ENCODE measurements at regions of chr17 and their contacts with region 1.

Region 1: GRCh38 chr17:17496189-17497064 is at the start of gene RASD1:
- DNase-seq: peak; percentile 93 to 95
- H3K4me3 ChIP-seq: peak within 1 kb of the TSS; percentile 58 to 64 (median 62)
- H3K27ac ChIP-seq: peak within 1 kb of the TSS; percentile 85 to 96 (median 92)
- H3K4me1 ChIP-seq: peaks cover 20 to 51% (median 49%) of the 10 kb centered on the region in 4 donors
- H3K27me3 ChIP-seq: peaks cover 0 to 17% (median 12%) of the 10 kb centered on the region in 3 donors
- CTCF ChIP-seq: peak in 5 of 7 experiments; percentile 30 to 98 (median 96)
- EP300 ChIP-seq: no peak
- POLR2A ChIP-seq: peak in 2 of 4 donors; percentile 61 to 97
- total RNA-seq, gene RASD1: 3.7 to 72.9 (median 25.0) TPM

Region 2: GRCh38 chr17:17356149-17356930 is 140.1 kb before region 1 on chr17:
- intact Hi-C with region 1: loop called (anchors 10 kb)
- DNase-seq: peak; percentile 83 to 94
- H3K4me3 ChIP-seq: no peak overlapping the region
- H3K27ac ChIP-seq: no peak overlapping the region
- H3K4me1 ChIP-seq: peaks cover 0 to 13% (median 6%) of the 10 kb centered on the region in 4 donors
- H3K27me3 ChIP-seq: peaks cover 0 to 21% (median 0%) of the 10 kb centered on the region in 3 donors
- CTCF ChIP-seq: peak in 6 of 7 experiments; percentile 90 to 100 (median 100)
- EP300 ChIP-seq: no peak
- POLR2A ChIP-seq: no peak

Region 3: DNA sequence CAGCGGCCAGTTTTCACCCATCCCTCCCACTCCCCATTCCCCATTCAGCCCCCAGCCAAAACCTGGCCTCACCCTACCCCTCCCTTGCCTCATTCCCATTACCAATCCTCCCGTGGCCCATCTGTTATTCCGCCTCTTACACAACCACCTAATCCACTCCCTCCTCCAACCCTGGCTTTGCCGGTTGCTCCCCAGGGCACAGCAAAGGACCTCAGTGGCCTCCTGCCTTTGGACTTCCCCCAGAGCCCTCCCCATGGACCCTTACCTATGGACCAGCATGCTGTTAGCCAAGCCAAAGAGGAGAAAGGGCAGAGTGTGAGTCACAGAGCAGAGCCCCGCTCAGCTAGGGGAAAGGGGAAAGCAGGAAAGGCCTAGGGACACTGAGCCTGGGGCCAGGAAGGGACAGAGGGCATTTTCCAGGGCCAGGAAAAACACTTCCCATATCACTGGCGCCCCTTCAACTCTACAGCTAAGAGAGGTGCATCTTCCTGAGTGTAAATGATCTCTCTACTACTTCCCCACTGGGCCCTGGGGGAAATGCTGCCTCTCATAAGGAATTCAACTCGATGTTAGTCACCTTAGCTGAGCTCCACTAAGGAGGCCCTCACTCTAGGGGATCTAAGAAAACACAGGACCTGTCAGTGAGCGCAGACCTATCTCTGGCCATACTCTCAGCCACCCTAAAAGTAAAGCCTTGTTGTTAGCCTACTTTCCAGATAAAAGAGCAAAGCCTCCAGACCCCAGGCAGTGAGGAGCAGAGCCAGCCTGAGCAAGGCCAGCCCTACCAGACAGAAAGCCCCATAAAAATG is 84.4 kb after region 1 on chr17:
- intact Hi-C with region 1: no loop called
- DNase-seq: peak in 1 of 2 donors; percentile 56
- H3K4me3 ChIP-seq: no peak overlapping the region
- H3K27ac ChIP-seq: no peak overlapping the region
- H3K4me1 ChIP-seq: no peaks in the 10 kb centered on the region
- H3K27me3 ChIP-seq: no peaks in the 10 kb centered on the region
- CTCF ChIP-seq: no peak
- EP300 ChIP-seq: no peak
- POLR2A ChIP-seq: no peak

Region 4: DNA sequence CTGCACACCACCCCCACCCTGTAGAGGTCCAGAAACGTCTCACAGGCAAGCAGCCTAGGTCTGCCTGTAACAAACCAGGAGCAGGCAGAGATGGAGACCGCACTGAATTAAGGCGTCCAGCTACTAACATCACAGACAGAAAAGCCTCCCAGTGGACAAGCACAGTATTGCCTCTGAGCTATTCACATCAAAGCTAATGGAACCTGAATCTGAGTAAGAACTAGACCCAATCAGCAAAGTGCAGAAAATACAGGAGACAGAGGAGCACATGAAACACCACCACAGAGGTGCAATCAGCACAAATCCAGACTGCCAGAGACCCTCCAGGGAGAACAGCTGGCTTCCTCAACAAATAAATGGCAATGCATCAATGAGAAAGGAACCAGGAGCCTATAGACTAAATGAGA is 117.3 kb after region 1 on chr17:
- intact Hi-C with region 1: loop called (anchors 10 kb)
- DNase-seq: peak; percentile 63 to 87
- H3K4me3 ChIP-seq: no peak overlapping the region
- H3K27ac ChIP-seq: no peak overlapping the region
- H3K4me1 ChIP-seq: no peaks in the 10 kb centered on the region
- H3K27me3 ChIP-seq: no peaks in the 10 kb centered on the region
- CTCF ChIP-seq: peak in 5 of 7 experiments; percentile 69 to 79 (median 74)
- EP300 ChIP-seq: no peak
- POLR2A ChIP-seq: no peak

Measured in stomach (tissue), 19 donors.